K562 (cell line): ENCODE measurements at regions of chr6 and their contacts with region 1.

Region 1: DNA sequence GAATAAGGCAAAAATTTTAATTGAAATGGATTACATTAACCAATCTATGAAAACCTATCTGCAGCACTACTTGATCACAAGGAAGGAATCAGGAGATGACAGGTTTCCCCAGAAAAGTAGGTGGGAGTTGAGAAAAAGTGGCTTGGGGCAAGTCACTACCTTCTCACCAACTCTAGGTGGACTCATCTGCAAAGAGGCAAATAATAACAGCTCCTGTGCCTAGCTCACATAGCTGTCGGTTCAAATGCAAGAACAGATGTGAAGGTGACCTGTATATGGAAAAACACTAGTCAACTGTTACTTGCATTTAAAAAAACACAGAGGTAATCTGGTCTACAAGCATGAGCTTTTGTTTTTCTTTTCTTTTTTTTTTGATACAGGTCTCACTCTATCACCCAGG is 67.2 kb downstream of the POPDC3 start:
- DNase-seq: peak in 2 of 4 experiments; percentile 11 to 14
- ATAC-seq: peak; percentile 74
- H3K4me3 ChIP-seq: no peak overlapping the region
- H3K27ac ChIP-seq: no peak overlapping the region
- H3K4me1 ChIP-seq: no peaks in the 10 kb centered on the region
- H3K27me3 ChIP-seq: peaks cover 13 to 16% of the 10 kb centered on the region in 2 experiments
- CTCF ChIP-seq: peak; percentile 8 to 24 (median 11); a peak in 2 of 6 replicates
- EP300 ChIP-seq: no peak
- POLR2A ChIP-seq: no peak
- RAD21 ChIP-seq: peak in 1 of 2 experiments; percentile 49; a peak in 2 of 4 replicates

Region 2: GRCh38 chr6:105263685-105264610 is 151.4 kb after region 1 on chr6:
- CTCF ChIA-PET with region 1: no interaction called
- POLR2A ChIA-PET with region 1: interaction called, 3 read pairs
- in situ Hi-C with region 1: no loop called
- intact Hi-C with region 1: loop called (anchors 10 kb)
- DNase-seq: no peak
- ATAC-seq: no peak
- H3K4me3 ChIP-seq: no peak overlapping the region
- H3K27ac ChIP-seq: no peak overlapping the region
- H3K4me1 ChIP-seq: no peaks in the 10 kb centered on the region
- H3K27me3 ChIP-seq: peaks cover 18 to 29% of the 10 kb centered on the region in 2 experiments; a peak in 4 of 5 replicates
- CTCF ChIP-seq: no peak
- EP300 ChIP-seq: no peak
- POLR2A ChIP-seq: no peak
- RAD21 ChIP-seq: no peak

Region 3: GRCh38 chr6:105591053-105591452 is 478.5 kb after region 1 on chr6:
- CTCF ChIA-PET with region 1: no interaction called
- POLR2A ChIA-PET with region 1: no interaction called
- in situ Hi-C with region 1: no loop called
- intact Hi-C with region 1: no loop called
- DNase-seq: no peak
- ATAC-seq: no peak; the same call in 2 of the 3 replicates
- H3K4me3 ChIP-seq: no peak overlapping the region
- H3K27ac ChIP-seq: no peak overlapping the region
- H3K4me1 ChIP-seq: no peaks in the 10 kb centered on the region
- H3K27me3 ChIP-seq: peaks cover 4 to 22% of the 10 kb centered on the region in 2 experiments; a peak in 4 of 5 replicates
- CTCF ChIP-seq: no peak
- EP300 ChIP-seq: no peak
- POLR2A ChIP-seq: no peak
- RAD21 ChIP-seq: no peak

Region 4: DNA sequence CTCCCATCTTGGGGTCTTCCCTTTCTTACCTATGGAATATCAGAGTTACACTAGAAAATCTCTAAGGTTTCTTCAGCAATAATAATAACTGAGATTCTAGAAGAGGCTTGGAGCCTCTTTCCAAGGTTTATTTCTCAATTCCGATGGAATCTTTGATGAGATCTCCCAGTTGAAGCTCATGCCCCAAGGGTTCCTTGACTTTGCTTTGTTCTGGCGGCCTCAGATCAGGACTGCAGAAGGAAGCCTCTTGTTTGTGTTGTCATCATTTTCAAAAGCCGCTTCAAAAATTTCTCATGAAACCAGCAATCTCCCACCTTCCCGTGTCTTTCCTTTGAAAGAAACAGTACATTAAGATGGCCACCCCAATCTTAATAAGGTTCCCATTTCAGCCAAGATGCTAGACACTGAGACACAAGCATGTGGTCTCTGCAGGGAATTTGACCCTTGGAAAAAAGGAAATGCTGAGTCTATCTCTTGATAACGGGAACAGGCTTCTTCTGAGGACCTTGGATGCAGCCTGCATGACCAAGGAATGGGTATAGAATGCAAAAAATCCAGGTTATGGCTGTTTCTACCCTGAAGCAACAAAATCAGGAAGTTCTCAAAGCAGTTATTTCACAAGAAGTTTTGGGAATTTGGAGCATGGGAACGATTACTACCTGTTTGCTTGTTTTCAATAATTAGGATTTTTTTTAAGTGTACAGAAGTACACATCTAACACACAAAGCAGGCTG is 1720.4 kb after region 1 on chr6:
- CTCF ChIA-PET with region 1: no interaction called
- POLR2A ChIA-PET with region 1: no interaction called
- in situ Hi-C with region 1: no loop called
- intact Hi-C with region 1: loop called (anchors 10 kb)
- DNase-seq: no peak
- ATAC-seq: no peak
- H3K4me3 ChIP-seq: no peak overlapping the region
- H3K27ac ChIP-seq: no peak overlapping the region
- H3K4me1 ChIP-seq: peaks cover 4 to 24% of the 10 kb centered on the region in 2 experiments
- H3K27me3 ChIP-seq: no peaks in the 10 kb centered on the region
- CTCF ChIP-seq: no peak
- EP300 ChIP-seq: no peak
- POLR2A ChIP-seq: no peak
- RAD21 ChIP-seq: no peak